HepG2 (cell line): ENCODE measurements at regions of chr15 and their contacts with region 1.

Region 1: GRCh38 chr15:62886431-62887071 is 156.0 kb upstream of the TPM1 start:
- DNase-seq: peak; percentile 97
- ATAC-seq: peak; percentile 94
- H3K4me3 ChIP-seq: peak overlapping the region; percentile 51 to 72 (median 57)
- H3K27ac ChIP-seq: peak overlapping the region; percentile 89
- H3K4me1 ChIP-seq: peaks cover 70% of the 10 kb centered on the region
- H3K27me3 ChIP-seq: no peaks in the 10 kb centered on the region
- CTCF ChIP-seq: peak; percentile 52
- EP300 ChIP-seq: peak; percentile 61 to 92; a peak in 3 of 4 replicates
- POLR2A ChIP-seq: peak in 1 of 2 experiments; percentile 35; a peak in 1 of 4 replicates
- RAD21 ChIP-seq: 0 out of 2 replicates have a peak, but pooled peaks have one; percentile 23

Region 2: GRCh38 chr15:62835351-62835750 is 51.2 kb before region 1 on chr15:
- CTCF ChIA-PET with region 1: no interaction called
- POLR2A ChIA-PET with region 1: no interaction called
- in situ Hi-C with region 1: no loop called
- intact Hi-C with region 1: no loop called
- DNase-seq: no peak
- ATAC-seq: no peak
- H3K4me3 ChIP-seq: no peak overlapping the region
- H3K27ac ChIP-seq: no peak overlapping the region
- H3K4me1 ChIP-seq: no peaks in the 10 kb centered on the region
- H3K27me3 ChIP-seq: no peaks in the 10 kb centered on the region
- CTCF ChIP-seq: no peak
- EP300 ChIP-seq: no peak
- POLR2A ChIP-seq: no peak
- RAD21 ChIP-seq: no peak

Region 3: DNA sequence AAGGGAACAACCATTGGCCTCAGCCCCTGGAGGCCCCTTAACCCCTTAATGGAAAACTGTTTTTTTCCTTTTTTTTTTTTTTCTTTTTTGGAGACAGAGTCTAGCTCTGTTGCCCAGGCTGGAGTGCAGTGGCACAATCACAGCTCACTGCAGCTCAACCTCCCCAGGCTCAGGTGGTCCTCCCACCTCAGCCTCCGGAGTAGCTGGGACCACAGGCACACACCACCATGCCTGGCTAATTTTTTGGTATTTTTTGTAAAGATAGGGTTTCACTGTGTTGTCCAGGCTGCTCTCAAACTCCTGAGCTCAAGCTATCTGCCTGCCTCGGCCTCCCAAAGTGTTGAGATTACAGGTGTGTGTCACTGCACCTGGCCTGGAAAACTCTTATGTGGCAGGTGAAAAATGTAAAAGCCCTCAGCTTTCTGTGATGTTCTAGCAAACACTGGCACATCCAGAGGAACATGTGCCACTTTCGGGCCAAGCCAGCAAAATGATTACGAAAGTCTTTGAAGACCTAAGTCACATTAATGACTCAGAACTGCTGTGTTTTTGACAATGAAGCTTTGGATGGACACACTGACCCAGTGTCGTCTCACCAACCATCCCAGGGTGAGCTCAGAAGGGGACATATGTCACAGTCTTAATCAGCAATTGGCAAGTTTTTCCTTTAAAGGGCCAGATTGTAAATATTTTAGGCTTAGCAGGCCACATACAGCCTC is 33.3 kb before region 1 on chr15:
- CTCF ChIA-PET with region 1: no interaction called
- POLR2A ChIA-PET with region 1: interaction called, 10 read pairs
- in situ Hi-C with region 1: no loop called
- intact Hi-C with region 1: loop called (anchors 1 kb)
- DNase-seq: peak; percentile 80
- ATAC-seq: peak; percentile 29; the same call in 1 of the 3 replicates
- H3K4me3 ChIP-seq: no peak overlapping the region
- H3K27ac ChIP-seq: no peak overlapping the region
- H3K4me1 ChIP-seq: peaks cover 79% of the 10 kb centered on the region
- H3K27me3 ChIP-seq: no peaks in the 10 kb centered on the region
- CTCF ChIP-seq: no peak
- EP300 ChIP-seq: no peak
- POLR2A ChIP-seq: no peak
- RAD21 ChIP-seq: no peak

Region 4: GRCh38 chr15:62896978-62897647 is 10.6 kb after region 1 on chr15:
- CTCF ChIA-PET with region 1: no interaction called
- POLR2A ChIA-PET with region 1: interaction called, 45 read pairs
- in situ Hi-C with region 1: no loop called
- intact Hi-C with region 1: no loop called
- DNase-seq: peak; percentile 93
- ATAC-seq: peak; percentile 91
- H3K4me3 ChIP-seq: peak overlapping the region in 2 of 3 experiments; percentile 54 to 57; a peak in 4 of 6 replicates
- H3K27ac ChIP-seq: peak overlapping the region; percentile 63
- H3K4me1 ChIP-seq: peaks cover 52% of the 10 kb centered on the region
- H3K27me3 ChIP-seq: no peaks in the 10 kb centered on the region
- CTCF ChIP-seq: no peak
- EP300 ChIP-seq: peak in 1 of 2 experiments; percentile 83; a peak in 2 of 4 replicates
- POLR2A ChIP-seq: no peak
- RAD21 ChIP-seq: no peak

Region 5: GRCh38 chr15:63041974-63042819 is 155.6 kb after region 1 on chr15 and contains the start of gene TPM1:
- CTCF ChIA-PET with region 1: no interaction called
- POLR2A ChIA-PET with region 1: no interaction called
- in situ Hi-C with region 1: no loop called
- intact Hi-C with region 1: loop called (anchors 2 kb)
- DNase-seq: peak; percentile 73
- ATAC-seq: peak; percentile 89
- H3K4me3 ChIP-seq: peak within 1 kb of the TSS; percentile 80 to 92 (median 89)
- H3K27ac ChIP-seq: peak within 1 kb of the TSS; percentile 49
- H3K4me1 ChIP-seq: peaks cover 50% of the 10 kb centered on the region
- H3K27me3 ChIP-seq: no peaks in the 10 kb centered on the region
- CTCF ChIP-seq: peak; percentile 52
- EP300 ChIP-seq: no peak
- POLR2A ChIP-seq: peak; percentile 0 to 66; a peak in 2 of 4 replicates
- RAD21 ChIP-seq: no peak
- total RNA-seq, gene TPM1: 98.9 and 113 TPM in 2 replicates

Region 6: GRCh38 chr15:63157118-63157843 is 270.7 kb after region 1 on chr15 and contains the start of gene RPS27L:
- CTCF ChIA-PET with region 1: no interaction called
- POLR2A ChIA-PET with region 1: no interaction called
- in situ Hi-C with region 1: no loop called
- intact Hi-C with region 1: no loop called
- DNase-seq: peak; percentile 88
- ATAC-seq: peak; percentile 98
- H3K4me3 ChIP-seq: peak within 1 kb of the TSS; percentile 78 to 96 (median 96)
- H3K27ac ChIP-seq: peak within 1 kb of the TSS; percentile 89
- H3K4me1 ChIP-seq: peaks cover 24% of the 10 kb centered on the region
- H3K27me3 ChIP-seq: no peaks in the 10 kb centered on the region; a peak in 1 of 5 replicates
- CTCF ChIP-seq: no peak
- EP300 ChIP-seq: no peak; a peak in 1 of 4 replicates
- POLR2A ChIP-seq: peak; percentile 91 to 95
- RAD21 ChIP-seq: peak; percentile 43; the same call in 1 of the 2 replicates
- total RNA-seq, gene RPS27L: 433 and 596 TPM in 2 replicates